OCI-LY7 (cell line): ENCODE measurements at regions of chr13 and their contacts with region 1.

Region 1: DNA sequence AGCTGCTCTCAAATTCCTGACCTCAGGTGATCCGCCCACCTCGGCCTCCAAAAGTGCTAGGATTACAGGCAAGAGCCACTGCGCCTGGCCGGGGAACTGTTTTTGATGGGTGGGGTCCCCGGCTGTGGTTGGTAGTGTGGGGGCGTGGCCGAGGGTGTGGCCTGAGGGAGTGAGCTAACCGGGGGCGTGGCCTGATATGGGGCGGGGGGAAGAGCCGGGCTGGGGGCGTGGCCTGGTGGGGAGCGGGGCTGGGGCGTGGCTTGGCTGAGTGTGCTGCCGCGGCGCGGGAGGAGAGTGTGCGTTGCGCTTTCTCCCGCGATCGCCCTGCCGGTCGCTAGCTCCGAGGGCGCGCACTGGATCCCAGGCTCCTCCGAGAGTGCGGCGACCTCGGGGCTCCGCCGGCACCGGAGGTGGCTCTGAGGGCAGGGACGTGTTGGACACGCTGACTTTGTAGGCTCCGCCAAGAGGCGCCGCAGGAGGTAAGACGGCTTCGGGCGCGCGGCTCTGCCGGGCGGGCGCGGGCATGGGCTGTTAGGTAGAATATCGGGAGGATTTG is at the start of gene SPATA13:
- DNase-seq: peak; percentile 89
- H3K4me3 ChIP-seq: peak within 1 kb of the TSS; percentile 73
- H3K27ac ChIP-seq: no peak within 1 kb of the TSS
- H3K4me1 ChIP-seq: peaks cover 11% of the 10 kb centered on the region
- CTCF ChIP-seq: no peak
- total RNA-seq, gene SPATA13: 3.8 and 6.6 TPM in 2 replicates

Region 2: GRCh38 chr13:24053519-24054251 is 106.8 kb before region 1 on chr13:
- CTCF ChIA-PET with region 1: no interaction called
- POLR2A ChIA-PET with region 1: no interaction called
- intact Hi-C with region 1: loop called (anchors 2 kb)
- DNase-seq: peak; percentile 78
- H3K4me3 ChIP-seq: no peak overlapping the region
- H3K27ac ChIP-seq: no peak overlapping the region
- H3K4me1 ChIP-seq: peaks cover 3% of the 10 kb centered on the region
- CTCF ChIP-seq: peak; percentile 91

Region 3: DNA sequence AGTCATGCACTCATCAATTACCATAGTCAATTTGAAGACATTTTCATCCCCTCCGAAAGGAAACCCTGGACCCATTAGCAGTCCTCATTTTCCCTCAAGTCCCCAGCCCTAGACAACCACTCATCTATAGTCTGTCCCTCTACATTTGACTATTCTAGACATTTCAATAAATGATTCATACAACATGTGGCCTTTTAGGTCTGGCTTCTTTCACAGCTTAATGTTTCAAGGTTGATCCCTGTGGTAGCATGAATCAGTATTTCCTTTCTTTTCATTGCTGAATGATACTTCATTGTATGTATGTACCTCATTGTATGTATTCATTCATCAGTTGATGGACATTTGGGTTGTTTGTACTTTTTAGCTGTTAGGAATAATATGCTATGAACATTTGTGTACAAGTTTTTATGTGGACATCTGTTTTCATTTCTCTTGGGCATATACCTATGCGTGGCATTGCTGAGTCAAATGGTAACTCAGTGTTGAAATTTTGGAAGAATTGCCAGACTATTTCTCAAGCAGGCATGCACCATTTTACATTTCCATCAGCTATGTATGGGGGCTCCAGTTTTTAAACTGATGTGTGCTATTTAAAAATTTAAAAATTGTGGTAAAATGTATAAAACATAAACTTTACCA is 18.4 kb after region 1 on chr13:
- CTCF ChIA-PET with region 1: interaction called, 3 read pairs
- POLR2A ChIA-PET with region 1: interaction called, 18 read pairs
- intact Hi-C with region 1: no loop called
- DNase-seq: no peak
- H3K4me3 ChIP-seq: no peak overlapping the region
- H3K27ac ChIP-seq: no peak overlapping the region
- H3K4me1 ChIP-seq: peaks cover 3% of the 10 kb centered on the region
- CTCF ChIP-seq: no peak

Region 4: GRCh38 chr13:24192057-24192810 is 31.7 kb after region 1 on chr13:
- CTCF ChIA-PET with region 1: interaction called, 6 read pairs
- POLR2A ChIA-PET with region 1: interaction called, 10 read pairs
- intact Hi-C with region 1: no loop called
- DNase-seq: no peak
- H3K4me3 ChIP-seq: no peak overlapping the region
- H3K27ac ChIP-seq: no peak overlapping the region
- H3K4me1 ChIP-seq: peaks cover 8% of the 10 kb centered on the region
- CTCF ChIP-seq: no peak

Region 5: DNA sequence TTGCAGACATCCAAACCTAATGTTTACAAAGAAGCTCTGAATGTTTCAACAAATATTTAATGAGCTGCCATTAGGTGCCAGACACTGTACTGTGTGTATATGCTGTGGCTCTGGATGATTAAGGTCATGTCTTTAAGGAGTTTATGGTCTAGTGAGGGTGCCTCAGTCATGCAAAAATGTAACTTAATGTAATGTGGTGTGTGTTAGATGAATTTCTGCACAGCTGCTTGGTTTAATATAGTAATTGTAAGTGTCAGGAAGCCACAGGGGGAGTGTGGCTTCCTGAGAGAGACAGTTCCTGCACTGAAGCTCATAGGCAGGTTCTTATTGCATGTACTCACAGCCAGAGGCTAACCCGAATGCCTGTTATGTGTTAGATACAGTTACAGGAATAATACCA is 43.3 kb after region 1 on chr13:
- CTCF ChIA-PET with region 1: interaction called, 3 read pairs
- POLR2A ChIA-PET with region 1: interaction called, 17 read pairs
- intact Hi-C with region 1: loop called (anchors 2 kb)
- DNase-seq: peak; percentile 73
- H3K4me3 ChIP-seq: peak overlapping the region; percentile 54
- H3K27ac ChIP-seq: peak overlapping the region; percentile 65
- H3K4me1 ChIP-seq: peaks cover 31% of the 10 kb centered on the region
- CTCF ChIP-seq: no peak